ENCODE measurements at regions of chr16 and their contacts with region 1.

Region 1: DNA sequence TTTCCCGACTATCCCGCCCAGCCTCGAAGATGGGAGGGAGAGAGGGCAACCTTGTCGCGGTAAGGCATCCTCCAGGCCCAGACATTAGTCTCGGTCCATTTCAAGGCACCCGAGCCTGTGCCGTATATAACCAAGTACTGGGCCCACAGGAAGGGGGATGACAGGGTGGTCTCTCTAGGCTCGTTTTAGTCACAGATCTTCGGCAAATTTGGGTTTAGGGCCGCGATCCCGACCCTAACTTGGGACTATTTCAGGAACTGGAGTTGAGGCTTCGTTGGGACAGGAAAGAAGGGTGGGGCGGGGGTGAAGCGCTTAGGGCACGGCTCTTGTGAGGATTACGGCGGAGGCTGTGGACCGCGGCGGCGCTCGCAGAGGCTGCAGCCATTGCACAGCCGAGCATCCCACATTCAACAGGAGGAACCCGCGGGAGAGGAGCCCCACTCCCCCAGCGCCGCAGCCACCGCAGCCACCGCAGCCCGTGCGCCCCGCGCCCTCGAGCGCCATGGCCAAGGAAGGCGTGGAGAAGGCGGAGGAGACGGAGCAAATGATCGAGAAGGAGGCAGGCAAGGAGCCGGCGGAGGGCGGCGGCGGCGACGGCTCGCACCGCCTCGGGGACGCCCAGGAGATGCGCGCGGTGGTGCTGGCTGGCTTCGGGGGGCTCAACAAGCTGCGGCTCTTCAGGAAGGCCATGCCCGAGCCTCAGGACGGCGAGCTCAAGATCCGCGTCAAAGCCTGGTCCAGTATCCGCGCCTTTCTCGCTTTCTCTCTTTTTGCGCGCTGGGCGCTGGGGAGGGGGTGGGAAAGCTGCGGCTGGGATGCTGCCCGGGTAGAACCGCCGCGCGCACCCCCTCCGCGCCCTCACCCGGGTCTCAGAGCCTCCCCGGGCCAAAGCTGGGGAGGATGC is at the start of gene VAT1L:
- DNase-seq: peak; percentile 51
- H3K4me3 ChIP-seq: peak within 1 kb of the TSS; percentile 34 to 59 (median 44)
- H3K27ac ChIP-seq: no peak within 1 kb of the TSS
- H3K4me1 ChIP-seq: peaks cover 8% of the 10 kb centered on the region
- H3K27me3 ChIP-seq: peaks cover 9% of the 10 kb centered on the region
- CTCF ChIP-seq: no peak
- total RNA-seq, gene VAT1L: not detected

Region 2: DNA sequence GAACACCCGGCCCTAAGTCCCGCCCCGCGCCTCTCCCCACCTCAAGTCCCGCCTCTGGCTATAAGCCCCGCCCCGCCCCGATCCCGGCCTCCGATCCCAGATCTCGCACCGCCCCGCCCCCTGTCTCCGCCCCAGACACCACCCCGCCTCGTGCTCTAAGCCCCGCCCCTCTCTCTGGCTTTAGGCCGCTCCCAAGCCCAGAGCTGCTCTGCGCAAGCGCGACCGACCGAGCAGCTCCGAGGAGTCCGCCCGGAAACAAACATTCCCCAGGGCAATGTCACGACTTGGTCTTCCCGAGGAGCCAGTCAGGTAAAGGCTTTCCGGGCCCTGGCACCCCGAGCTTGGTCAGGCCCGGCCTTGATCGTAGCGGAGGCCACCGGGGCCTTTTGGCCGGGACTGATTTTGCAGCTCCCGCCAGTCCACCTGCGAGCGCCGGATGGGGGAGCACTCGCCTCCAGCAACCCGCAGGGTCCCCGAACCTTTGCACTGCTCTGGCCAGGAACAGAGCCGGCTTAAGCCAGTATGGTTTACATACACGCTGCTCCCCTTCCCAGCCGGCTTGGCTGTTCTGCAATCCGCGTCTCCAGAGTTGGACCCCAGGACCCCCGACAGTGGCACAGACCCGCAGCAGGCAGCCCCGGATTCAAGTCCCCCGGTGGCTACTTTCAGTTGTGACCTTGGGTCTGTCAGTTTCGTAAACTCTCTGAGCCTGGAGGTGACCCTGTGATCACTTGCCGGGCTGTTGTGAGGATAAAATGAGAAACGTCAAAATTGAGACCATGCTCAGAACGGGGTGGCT is 65.9 kb before region 1 on chr16 and contains the start of gene NUDT7:
- CTCF ChIA-PET with region 1: no interaction called
- dilution Hi-C with region 1: no loop called
- in situ Hi-C with region 1: no loop called
- intact Hi-C with region 1: loop called (anchors 10 kb)
- DNase-seq: peak; percentile 94
- H3K4me3 ChIP-seq: peak within 1 kb of the TSS; percentile 59 to 67 (median 63)
- H3K27ac ChIP-seq: peak within 1 kb of the TSS; percentile 68
- H3K4me1 ChIP-seq: peaks cover 10% of the 10 kb centered on the region
- H3K27me3 ChIP-seq: no peaks in the 10 kb centered on the region
- CTCF ChIP-seq: peak in 1 of 2 donors; percentile 33
- total RNA-seq, gene NUDT7: 2.8 to 5.1 TPM